Prostate gland (tissue), 2 donors: ENCODE measurements at regions of chr7 and their contacts with region 1.

Region 1: GRCh38 chr7:138161600-138162081 is 85.4 kb downstream of the AKR1D1 start:
- DNase-seq: peak; percentile 79
- H3K4me3 ChIP-seq: no peak overlapping the region
- H3K27ac ChIP-seq: no peak overlapping the region
- H3K4me1 ChIP-seq: no peaks in the 10 kb centered on the region
- H3K27me3 ChIP-seq: no peaks in the 10 kb centered on the region
- CTCF ChIP-seq: peak; percentile 36 to 76 (median 67)
- POLR2A ChIP-seq: no peak

Region 2: DNA sequence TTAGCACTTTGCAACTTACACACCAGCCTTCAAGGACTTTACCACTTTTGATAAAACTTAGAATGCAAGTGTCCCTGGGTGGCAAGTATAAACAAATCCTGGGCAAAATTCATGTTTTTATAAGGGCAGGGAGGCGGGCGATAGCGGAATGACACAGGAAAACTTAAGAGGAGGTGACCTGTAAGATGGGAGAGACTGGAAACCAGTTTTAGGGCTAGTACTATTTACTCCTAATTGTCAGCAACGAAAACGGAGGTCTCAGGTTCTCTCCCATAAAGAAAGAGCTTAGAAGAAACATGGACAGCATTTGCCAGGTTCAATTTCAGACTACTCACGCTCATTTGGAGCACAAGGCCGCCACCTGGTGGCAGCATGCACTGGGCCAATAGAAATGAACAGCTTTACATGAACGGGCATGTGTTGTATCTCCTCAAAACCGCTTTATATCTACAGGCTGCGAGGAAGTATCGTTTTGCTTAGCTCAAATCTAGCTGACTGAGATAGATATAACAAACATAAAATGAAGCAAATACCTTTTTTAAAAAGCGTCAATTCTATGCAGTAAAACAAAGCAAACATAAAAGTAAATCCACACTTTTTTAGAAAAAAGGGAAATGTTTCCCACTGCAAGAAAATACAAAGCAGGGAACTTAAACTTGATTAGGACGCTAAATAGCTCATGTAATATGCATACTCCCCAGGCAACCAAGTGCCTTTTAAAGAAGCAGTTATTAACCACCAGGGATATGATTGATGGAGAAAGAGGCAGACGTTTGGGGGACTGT is 577.1 kb after region 1 on chr7:
- intact Hi-C with region 1: loop called (anchors 10 kb)
- DNase-seq: peak; percentile 80
- H3K4me3 ChIP-seq: no peak overlapping the region
- H3K27ac ChIP-seq: no peak overlapping the region
- H3K4me1 ChIP-seq: no peaks in the 10 kb centered on the region
- H3K27me3 ChIP-seq: no peaks in the 10 kb centered on the region
- CTCF ChIP-seq: peak; percentile 71 to 90 (median 89)
- POLR2A ChIP-seq: no peak